BJ (cell line): ENCODE measurements at regions of chr12 and their contacts with region 1.

Region 1: DNA sequence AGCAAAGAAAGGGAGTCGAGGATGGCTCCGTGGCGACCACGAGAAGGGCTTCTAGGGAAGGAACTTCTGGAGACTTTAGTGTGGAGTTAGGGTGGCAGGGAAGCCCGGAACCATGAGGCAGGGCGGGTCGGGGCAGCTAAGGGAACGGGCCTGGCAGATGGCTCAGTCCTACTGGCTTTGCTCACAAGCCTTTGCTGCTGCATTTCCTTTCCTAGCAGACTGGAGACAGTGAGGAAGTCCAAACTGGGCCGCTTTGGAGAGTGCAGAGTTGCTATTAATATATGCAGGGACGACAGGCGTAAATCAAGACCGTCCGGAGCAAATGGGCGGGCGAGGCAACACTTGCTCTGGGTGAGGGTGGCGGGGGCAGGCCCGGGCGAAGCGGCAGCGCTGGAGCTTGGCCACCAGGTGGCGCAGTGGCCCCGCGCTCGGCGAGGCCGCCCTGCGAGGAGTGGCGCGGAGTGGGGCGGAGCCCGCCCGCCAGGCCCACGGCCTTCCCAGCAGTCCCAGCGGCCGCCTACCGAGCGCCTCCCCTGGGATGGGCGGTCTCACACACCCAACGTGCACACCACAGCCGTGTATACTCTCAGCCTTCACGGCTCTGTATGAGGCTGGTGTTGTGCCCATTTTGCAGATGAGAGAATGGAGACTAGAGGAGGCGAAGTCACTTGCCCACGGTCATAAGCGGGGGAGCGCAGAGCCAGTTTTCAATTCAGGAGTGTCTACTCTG is 24.4 kb upstream of the LRTM2 start:
- DNase-seq: peak; percentile 29
- H3K4me3 ChIP-seq: peak overlapping the region; percentile 48
- H3K27me3 ChIP-seq: no peaks in the 10 kb centered on the region
- CTCF ChIP-seq: peak; percentile 72

Region 2: DNA sequence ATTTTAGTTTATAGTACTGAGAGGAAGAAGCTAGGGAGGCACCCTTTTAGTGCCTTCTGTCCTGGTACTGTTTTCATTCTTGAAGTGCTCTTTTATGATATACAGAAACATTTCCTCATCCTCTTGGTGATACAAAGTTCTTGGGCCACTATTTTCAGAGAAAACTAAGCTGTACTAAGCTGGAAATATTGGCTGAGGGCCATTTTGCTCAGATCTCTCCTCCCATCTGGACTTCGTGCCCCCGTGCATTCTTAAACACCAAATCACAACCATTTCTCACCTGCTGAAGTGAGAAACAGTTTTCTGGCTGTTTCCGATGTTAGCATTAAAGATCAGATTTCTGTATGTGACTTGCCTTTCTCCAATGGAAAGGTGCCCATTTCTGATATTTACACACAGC is 360.5 kb before region 1 on chr12:
- CTCF ChIA-PET with region 1: no interaction called
- POLR2A ChIA-PET with region 1: no interaction called
- DNase-seq: no peak
- H3K4me3 ChIP-seq: no peak overlapping the region
- H3K27me3 ChIP-seq: no peaks in the 10 kb centered on the region
- CTCF ChIP-seq: no peak

Region 3: DNA sequence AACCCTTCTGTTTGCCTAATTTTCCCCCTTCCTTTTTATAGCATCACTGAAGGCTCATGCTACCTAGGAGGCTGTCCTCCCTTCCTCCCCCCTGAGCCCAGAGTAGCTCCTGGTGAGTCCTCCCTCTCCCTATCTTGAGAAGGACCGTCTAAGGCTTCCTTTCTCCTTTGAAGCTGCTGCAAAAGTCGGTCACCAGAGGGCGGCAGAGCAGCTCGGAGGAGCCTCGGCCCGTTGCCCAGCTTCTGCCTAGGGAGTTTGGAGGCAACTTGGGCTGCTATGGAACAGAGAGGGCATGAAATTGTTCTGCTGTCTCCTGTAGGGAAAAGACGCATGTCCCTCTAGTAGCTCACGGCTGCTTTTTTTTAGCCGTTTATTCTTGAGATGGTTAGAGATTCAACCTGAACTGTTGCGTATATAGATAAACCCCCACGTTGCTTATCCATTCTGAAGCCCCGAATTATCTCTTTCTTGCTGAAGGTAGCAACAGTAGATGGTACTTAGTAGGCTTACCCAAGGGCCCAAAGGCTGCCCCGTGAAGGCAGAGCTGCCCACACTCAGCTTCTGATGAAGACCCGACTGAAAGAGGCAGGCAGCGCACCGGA is 161.3 kb before region 1 on chr12:
- CTCF ChIA-PET with region 1: interaction called, 63 read pairs
- POLR2A ChIA-PET with region 1: no interaction called
- DNase-seq: no peak
- H3K4me3 ChIP-seq: no peak overlapping the region
- H3K27me3 ChIP-seq: no peaks in the 10 kb centered on the region
- CTCF ChIP-seq: peak; percentile 95

Region 4: DNA sequence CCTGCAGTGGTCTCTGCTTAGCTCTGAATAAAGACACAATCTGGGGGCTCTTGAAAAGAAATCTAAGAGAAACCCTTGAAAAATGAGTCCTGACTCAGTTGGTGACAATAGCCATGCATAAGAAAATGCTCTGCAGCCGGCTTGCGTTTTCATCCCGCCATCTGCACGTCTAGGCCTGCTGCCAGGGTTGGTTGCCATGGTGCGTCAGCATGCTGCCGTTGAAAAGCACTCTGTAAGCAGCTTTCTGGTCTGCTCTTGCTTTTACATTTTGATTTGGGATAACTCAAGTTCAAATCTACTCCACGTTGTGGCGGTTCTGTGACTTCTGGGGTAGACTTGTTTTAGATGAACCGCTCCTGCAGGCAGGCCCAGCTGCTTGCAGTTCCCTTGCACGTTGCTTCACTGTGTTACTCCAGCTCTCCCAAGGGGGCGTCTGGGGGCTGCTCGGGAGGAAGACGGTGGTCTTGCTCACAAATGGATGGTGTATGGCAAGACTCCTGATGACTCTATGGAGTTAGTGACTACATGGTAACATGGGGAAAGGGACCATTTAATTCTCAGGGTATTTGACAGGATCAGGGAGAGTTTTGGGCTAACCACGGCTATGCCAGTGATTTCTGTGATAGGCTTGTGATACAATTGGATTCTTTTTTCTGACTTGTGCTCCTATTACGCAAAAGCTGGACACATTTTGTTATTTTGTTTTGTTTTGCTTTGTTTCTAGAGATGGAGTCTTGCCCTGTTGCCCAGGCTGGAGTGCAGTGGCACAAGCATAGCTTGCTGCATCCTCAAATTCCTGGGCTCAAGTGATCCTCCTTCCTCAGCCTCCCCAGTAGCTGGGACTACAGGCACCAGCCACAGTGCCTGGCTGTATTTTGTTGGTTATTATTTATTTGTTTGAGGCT is 151.2 kb before region 1 on chr12:
- CTCF ChIA-PET with region 1: interaction called, 45 read pairs
- POLR2A ChIA-PET with region 1: no interaction called
- DNase-seq: peak; percentile 56
- H3K4me3 ChIP-seq: no peak overlapping the region
- H3K27me3 ChIP-seq: no peaks in the 10 kb centered on the region
- CTCF ChIP-seq: no peak

Region 5: DNA sequence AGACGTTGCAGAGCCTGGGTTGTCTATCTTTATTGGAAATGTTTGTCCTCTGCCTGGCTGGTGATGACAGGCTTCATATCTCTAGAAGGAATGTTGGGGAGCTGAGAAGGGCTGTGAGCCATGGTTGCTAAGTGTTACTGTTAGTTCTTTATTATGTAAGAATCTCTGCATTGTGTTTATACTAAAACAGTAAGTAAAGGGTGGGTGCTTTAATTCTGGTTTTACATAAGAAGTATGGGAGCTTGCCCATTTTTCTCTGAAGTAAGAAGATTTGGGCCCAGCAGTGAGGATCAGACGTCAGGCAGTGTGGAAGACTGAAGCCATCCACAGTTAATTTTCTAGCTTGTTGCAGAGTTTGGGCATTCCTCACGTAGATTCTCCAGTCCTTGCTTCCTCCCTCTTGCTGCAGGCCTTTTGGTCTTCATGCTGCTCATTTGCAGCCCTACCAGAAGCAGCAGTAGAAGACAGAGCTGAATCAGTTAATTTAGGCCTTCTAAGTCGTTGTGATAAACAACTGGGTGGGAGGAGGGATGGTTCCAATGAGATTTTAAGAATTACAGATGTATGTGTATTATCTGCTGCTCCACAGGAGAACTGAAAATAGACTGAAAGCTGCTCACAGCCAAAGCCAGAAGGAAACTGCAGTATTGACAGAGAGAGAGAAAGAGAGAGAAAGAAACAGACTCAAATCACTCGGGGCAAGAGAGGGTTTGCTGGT is 145.5 kb before region 1 on chr12:
- CTCF ChIA-PET with region 1: interaction called, 242 read pairs
- POLR2A ChIA-PET with region 1: interaction called, 13 read pairs
- DNase-seq: no peak
- H3K4me3 ChIP-seq: no peak overlapping the region
- H3K27me3 ChIP-seq: no peaks in the 10 kb centered on the region
- CTCF ChIP-seq: no peak

Region 6: DNA sequence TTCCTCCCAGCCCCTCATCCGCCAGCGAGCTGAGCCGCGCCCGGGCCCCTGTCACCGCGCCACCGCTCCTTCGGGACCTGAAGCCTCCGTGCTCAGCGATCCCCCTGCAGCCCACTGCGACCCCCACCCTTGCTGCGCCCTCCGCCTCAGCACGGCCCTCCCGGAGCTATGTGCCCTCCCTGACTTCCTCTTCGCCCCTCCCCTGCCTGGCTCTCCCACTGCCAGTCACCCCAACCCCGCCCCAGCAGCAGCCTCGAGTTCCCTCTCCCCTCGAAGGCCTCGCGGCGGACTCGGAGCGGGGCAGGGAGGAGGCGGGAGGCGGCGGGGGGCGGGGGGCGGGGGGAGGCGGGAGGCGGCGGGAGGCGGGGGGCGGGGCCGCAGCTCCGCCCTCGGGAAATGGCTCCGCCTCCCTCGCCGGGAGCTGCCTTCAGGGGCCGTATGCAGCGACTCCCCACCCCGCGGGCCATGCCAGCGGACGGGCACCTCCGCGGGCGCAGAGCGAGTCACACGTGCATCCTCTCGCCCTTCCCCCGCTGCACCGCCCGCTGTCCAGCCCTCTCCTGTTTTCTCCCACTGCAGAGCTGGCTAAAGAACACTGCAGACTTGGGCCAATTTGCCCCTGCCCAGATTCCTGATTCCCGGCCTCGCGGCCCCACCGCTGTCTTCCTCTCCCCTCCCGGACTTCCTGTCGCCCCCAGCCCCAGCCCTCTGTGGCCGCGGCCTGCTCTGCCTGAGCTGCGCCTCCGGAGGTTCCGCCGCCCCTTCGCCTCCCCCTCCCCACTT is 134.2 kb before region 1 on chr12:
- CTCF ChIA-PET with region 1: interaction called, 242 read pairs
- POLR2A ChIA-PET with region 1: no interaction called
- DNase-seq: peak; percentile 37
- H3K4me3 ChIP-seq: peak overlapping the region; percentile 47
- H3K27me3 ChIP-seq: no peaks in the 10 kb centered on the region
- CTCF ChIP-seq: no peak

Region 7: GRCh38 chr12:1781772-1782171 is 14.2 kb before region 1 on chr12:
- CTCF ChIA-PET with region 1: interaction called, 22 read pairs
- POLR2A ChIA-PET with region 1: no interaction called
- DNase-seq: no peak
- H3K4me3 ChIP-seq: no peak overlapping the region
- H3K27me3 ChIP-seq: no peaks in the 10 kb centered on the region
- CTCF ChIP-seq: no peak

Region 8: DNA sequence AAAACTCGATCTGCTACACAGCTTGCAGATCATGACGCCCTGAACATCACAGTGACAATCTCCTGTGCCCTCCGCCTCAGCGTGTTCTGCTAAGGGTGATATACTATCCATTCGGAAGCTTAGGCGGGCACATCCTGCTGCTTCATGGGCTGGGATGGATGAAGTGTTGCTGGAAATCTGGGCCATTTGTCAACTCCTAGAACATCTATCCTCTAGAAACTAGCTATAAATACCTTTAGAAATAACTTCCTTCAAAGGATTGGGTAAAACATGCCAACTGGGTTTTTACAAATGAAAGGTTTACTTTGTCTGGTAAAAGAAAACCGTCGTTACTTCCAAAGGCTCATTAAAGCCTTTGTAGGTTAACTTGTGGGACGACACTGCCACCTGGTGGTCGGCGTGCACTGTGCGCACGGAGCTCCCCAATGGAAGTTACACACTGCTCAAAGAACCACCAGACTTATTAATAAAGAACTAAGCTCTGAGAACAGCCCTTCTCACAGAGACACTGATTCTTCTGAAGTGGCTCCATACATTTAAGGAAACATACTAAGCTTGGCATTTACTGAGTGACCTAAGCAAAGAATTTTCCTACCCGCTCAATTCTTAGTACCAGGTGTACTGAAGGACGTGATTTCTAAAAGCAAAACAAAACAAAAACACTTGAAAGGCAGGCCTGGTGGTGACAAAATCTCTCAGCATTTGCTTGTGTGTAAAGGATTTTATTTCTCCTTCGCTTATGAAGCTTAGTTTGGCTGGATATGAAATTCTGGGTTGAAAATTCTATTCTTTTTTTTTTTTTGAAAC is 144.1 kb after region 1 on chr12:
- CTCF ChIA-PET with region 1: interaction called, 78 read pairs
- POLR2A ChIA-PET with region 1: no interaction called
- DNase-seq: peak; percentile 19
- H3K4me3 ChIP-seq: no peak overlapping the region
- H3K27me3 ChIP-seq: no peaks in the 10 kb centered on the region
- CTCF ChIP-seq: peak; percentile 95